Heart left ventricle (tissue), 16 donors: ENCODE measurements at regions of chr20 and their contacts with region 1.

Region 1: GRCh38 chr20:58650776-58651558 is at the start of gene STX16:
- DNase-seq: peak; percentile 90 to 95 (median 94)
- ATAC-seq: peak; percentile 95 to 98 (median 97)
- H3K4me3 ChIP-seq: peak within 1 kb of the TSS; percentile 78 to 99 (median 97)
- H3K27ac ChIP-seq: peak within 1 kb of the TSS; percentile 87 to 98 (median 96)
- H3K4me1 ChIP-seq: peaks cover 3 to 49% (median 35%) of the 10 kb centered on the region in 12 donors
- H3K27me3 ChIP-seq: no peaks in the 10 kb centered on the region
- CTCF ChIP-seq: peak; percentile 36 to 88 (median 62)
- POLR2A ChIP-seq: peak in 1 of 2 donors; percentile 65
- total RNA-seq, gene STX16: 14.6 to 38.9 (median 25.6) TPM

Region 2: GRCh38 chr20:58236612-58237330 is 414.2 kb before region 1 on chr20:
- intact Hi-C with region 1: loop called (anchors 2 to 10 kb)
- DNase-seq: peak; percentile 53 to 83 (median 71)
- ATAC-seq: peak; percentile 82 to 93 (median 92)
- H3K4me3 ChIP-seq: peak overlapping the region in 11 of 12 donors; percentile 16 to 59 (median 50)
- H3K27ac ChIP-seq: peak overlapping the region in 1 of 12 donors; percentile 18
- H3K4me1 ChIP-seq: peaks cover 0 to 11% (median 0%) of the 10 kb centered on the region in 12 donors
- H3K27me3 ChIP-seq: no peaks in the 10 kb centered on the region
- CTCF ChIP-seq: peak; percentile 94 to 98 (median 96)
- POLR2A ChIP-seq: no peak

Region 3: DNA sequence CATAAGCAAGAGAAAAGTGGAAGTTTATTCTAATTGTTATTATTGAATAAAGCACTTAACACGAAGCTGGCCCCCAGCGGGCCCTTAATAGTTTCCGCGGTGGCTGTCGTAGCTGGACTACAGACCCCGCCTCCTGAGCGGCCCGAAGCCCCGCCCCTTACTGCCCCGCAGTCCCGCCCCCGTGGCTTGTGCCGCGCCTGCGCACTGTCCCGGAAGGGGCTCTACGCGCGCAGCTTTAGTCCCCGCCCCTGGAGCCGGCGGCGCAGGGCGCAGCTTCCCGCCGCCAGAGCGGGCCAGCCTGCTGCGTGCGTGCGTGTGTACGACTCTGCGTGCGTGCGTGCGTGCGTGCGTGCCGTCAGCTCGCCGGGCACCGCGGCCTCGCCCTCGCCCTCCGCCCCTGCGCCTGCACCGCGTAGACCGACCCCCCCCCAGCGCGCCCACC is 262.1 kb before region 1 on chr20 and contains the start of gene VAPB:
- intact Hi-C with region 1: loop called in 2 of 10 experiments (anchors 5 kb)
- DNase-seq: peak; percentile 94 to 99 (median 96)
- ATAC-seq: peak; percentile 99 to 100 (median 99)
- H3K4me3 ChIP-seq: peak within 1 kb of the TSS; percentile 69 to 91 (median 86)
- H3K27ac ChIP-seq: peak within 1 kb of the TSS; percentile 80 to 97 (median 94)
- H3K4me1 ChIP-seq: peaks cover 0 to 46% (median 29%) of the 10 kb centered on the region in 12 donors
- H3K27me3 ChIP-seq: no peaks in the 10 kb centered on the region
- CTCF ChIP-seq: no peak
- POLR2A ChIP-seq: peak in 1 of 2 donors; percentile 85
- total RNA-seq, gene VAPB: 30.7 to 76.1 (median 63.8) TPM

Region 4: GRCh38 chr20:58511364-58511763 is 139.6 kb before region 1 on chr20:
- intact Hi-C with region 1: no loop called
- DNase-seq: no peak
- ATAC-seq: no peak
- H3K4me3 ChIP-seq: no peak overlapping the region
- H3K27ac ChIP-seq: no peak overlapping the region
- H3K4me1 ChIP-seq: peaks cover 0 to 10% (median 0%) of the 10 kb centered on the region in 12 donors
- H3K27me3 ChIP-seq: peaks cover 12 to 46% (median 33%) of the 10 kb centered on the region in 9 donors
- CTCF ChIP-seq: no peak
- POLR2A ChIP-seq: no peak

Region 5: GRCh38 chr20:58550275-58551060 is 100.5 kb before region 1 on chr20:
- intact Hi-C with region 1: no loop called
- DNase-seq: no peak
- ATAC-seq: no peak
- H3K4me3 ChIP-seq: no peak overlapping the region
- H3K27ac ChIP-seq: no peak overlapping the region
- H3K4me1 ChIP-seq: peaks cover 0 to 5% (median 0%) of the 10 kb centered on the region in 12 donors
- H3K27me3 ChIP-seq: peaks cover 0 to 29% (median 8%) of the 10 kb centered on the region in 9 donors
- CTCF ChIP-seq: no peak
- POLR2A ChIP-seq: no peak

Region 6: GRCh38 chr20:58692594-58693226 is 41.7 kb after region 1 on chr20 and contains the start of gene NPEPL1:
- intact Hi-C with region 1: loop called in 9 of 10 experiments (anchors 1 to 5 kb)
- DNase-seq: peak; percentile 77 to 88 (median 79)
- ATAC-seq: peak; percentile 33 to 92 (median 83)
- H3K4me3 ChIP-seq: peak within 1 kb of the TSS in 11 of 12 donors; percentile 34 to 74 (median 59)
- H3K27ac ChIP-seq: peak within 1 kb of the TSS; percentile 84 to 98 (median 92)
- H3K4me1 ChIP-seq: peaks cover 7 to 43% (median 22%) of the 10 kb centered on the region in 12 donors
- H3K27me3 ChIP-seq: no peaks in the 10 kb centered on the region
- CTCF ChIP-seq: peak in 3 of 12 donors; percentile 16 to 32 (median 17)
- POLR2A ChIP-seq: peak in 1 of 2 donors; percentile 31
- total RNA-seq, gene NPEPL1: 18.5 to 33.4 (median 30.1) TPM

Region 7: GRCh38 chr20:58850693-58851174 is 199.8 kb after region 1 on chr20 and contains the start of gene GNAS-AS1:
- intact Hi-C with region 1: loop called in 3 of 10 experiments (anchors 5 to 10 kb)
- DNase-seq: peak; percentile 83 to 91 (median 88)
- ATAC-seq: peak; percentile 79 to 91 (median 88)
- H3K4me3 ChIP-seq: peak within 1 kb of the TSS; percentile 15 to 78 (median 57)
- H3K27ac ChIP-seq: no peak within 1 kb of the TSS
- H3K4me1 ChIP-seq: peaks cover 0 to 27% (median 5%) of the 10 kb centered on the region in 12 donors
- H3K27me3 ChIP-seq: peaks cover 11 to 61% (median 26%) of the 10 kb centered on the region in 9 donors
- CTCF ChIP-seq: peak in 3 of 12 donors; percentile 15 to 23 (median 22)
- POLR2A ChIP-seq: no peak
- total RNA-seq, gene GNAS-AS1: 0.22 to 0.79 (median 0.29) TPM in 7 of 9 donors, not detected in the others

Region 8: DNA sequence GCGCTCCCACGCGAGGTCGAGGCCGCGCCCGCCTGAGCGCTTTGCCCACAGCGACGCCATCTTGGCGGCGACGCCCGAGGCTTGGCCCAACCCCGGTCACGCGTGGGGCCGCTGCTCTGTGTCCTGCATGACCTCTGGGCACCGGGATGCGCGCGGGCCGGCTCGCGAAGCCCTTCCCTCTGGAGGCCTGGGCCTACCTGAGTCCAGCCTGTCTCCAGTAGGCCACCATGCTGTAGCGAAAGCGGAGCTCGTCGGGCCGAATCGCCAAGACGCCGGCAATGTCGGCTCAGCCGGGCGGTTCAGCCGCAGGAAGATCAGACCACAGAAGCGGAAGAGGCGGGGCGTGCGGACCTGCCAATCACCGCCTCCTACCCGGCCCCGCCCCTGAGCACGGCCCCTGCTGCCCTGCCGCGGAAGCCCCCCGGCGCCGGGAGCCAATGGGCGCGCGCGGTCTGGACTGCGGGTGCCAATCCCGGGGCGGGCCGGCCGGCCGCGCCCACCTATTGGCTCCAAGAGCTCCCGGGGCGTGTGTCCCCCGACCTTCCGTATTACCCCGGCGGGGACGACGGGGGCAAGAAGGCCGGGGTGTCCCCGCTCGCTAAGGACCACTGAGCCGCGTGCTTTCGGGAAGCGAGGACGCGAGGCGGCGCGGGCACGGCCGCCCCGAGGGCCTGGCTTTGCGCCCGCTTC is 381.2 kb after region 1 on chr20 and contains the start of gene ATP5F1E:
- intact Hi-C with region 1: loop called in 1 of 10 experiments (anchors 5 kb)
- DNase-seq: peak; percentile 97 to 98 (median 98)
- ATAC-seq: peak; percentile 99 to 100 (median 100)
- H3K4me3 ChIP-seq: peak within 1 kb of the TSS; percentile 59 to 94 (median 83)
- H3K27ac ChIP-seq: peak within 1 kb of the TSS; percentile 83 to 98 (median 92)
- H3K4me1 ChIP-seq: peaks cover 0 to 52% (median 48%) of the 10 kb centered on the region in 12 donors
- H3K27me3 ChIP-seq: no peaks in the 10 kb centered on the region
- CTCF ChIP-seq: peak in 1 of 12 donors; percentile 3
- POLR2A ChIP-seq: peak; percentile 86 to 97
- total RNA-seq, gene ATP5F1E: 38.5 to 153 (median 116) TPM